ENCODE measurements at regions of chr11 and their contacts with region 1.

Region 1: GRCh38 chr11:45527898-45528297 is 137.5 kb downstream of the CHST1 start:
- DNase-seq: no peak
- H3K4me3 ChIP-seq: no peak overlapping the region
- H3K27ac ChIP-seq: no peak overlapping the region
- H3K4me1 ChIP-seq: no peaks in the 10 kb centered on the region
- H3K27me3 ChIP-seq: no peaks in the 10 kb centered on the region
- CTCF ChIP-seq: no peak
- EP300 ChIP-seq: no peak
- POLR2A ChIP-seq: no peak

Region 2: GRCh38 chr11:45339729-45340519 is 188.0 kb before region 1 on chr11:
- in situ Hi-C with region 1: no loop called
- intact Hi-C with region 1: no loop called
- DNase-seq: peak; percentile 96
- H3K4me3 ChIP-seq: peak overlapping the region in 1 of 4 donors; percentile 11
- H3K27ac ChIP-seq: no peak overlapping the region
- H3K4me1 ChIP-seq: peaks cover 0 to 8% (median 3%) of the 10 kb centered on the region in 4 donors
- H3K27me3 ChIP-seq: peaks cover 22% of the 10 kb centered on the region
- CTCF ChIP-seq: peak; percentile 89 to 95 (median 91)
- EP300 ChIP-seq: no peak
- POLR2A ChIP-seq: no peak

Region 3: GRCh38 chr11:45468262-45468856 is 59.5 kb before region 1 on chr11:
- in situ Hi-C with region 1: loop called in 1 of 4 experiments (anchors 10 kb)
- intact Hi-C with region 1: no loop called
- DNase-seq: no peak
- H3K4me3 ChIP-seq: no peak overlapping the region
- H3K27ac ChIP-seq: no peak overlapping the region
- H3K4me1 ChIP-seq: no peaks in the 10 kb centered on the region
- H3K27me3 ChIP-seq: no peaks in the 10 kb centered on the region
- CTCF ChIP-seq: no peak
- EP300 ChIP-seq: no peak
- POLR2A ChIP-seq: no peak

Region 4: DNA sequence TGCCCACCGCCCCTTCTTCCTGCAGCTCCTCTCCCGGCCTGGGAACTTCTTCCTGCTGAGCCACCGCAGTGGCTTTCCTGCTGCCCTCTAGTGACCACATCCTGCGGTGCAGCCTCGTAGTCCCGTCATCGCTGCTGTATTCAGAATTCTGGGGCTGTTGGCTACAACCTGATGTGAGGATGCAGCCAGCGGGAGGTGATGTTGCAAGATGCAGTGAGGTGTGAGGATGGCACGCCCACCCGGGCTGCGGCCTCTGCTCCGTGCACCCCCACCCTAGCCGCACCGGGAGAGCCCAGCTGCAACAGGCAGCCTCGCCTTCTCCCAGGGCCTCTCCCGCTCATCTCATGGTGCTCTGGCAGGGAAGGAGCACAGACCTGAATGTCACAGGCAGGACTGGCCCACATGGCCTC is 127.5 kb after region 1 on chr11:
- in situ Hi-C with region 1: no loop called
- intact Hi-C with region 1: no loop called
- DNase-seq: peak; percentile 65
- H3K4me3 ChIP-seq: no peak overlapping the region
- H3K27ac ChIP-seq: no peak overlapping the region
- H3K4me1 ChIP-seq: no peaks in the 10 kb centered on the region
- H3K27me3 ChIP-seq: peaks cover 36% of the 10 kb centered on the region
- CTCF ChIP-seq: peak; percentile 71 to 88 (median 85)
- EP300 ChIP-seq: no peak
- POLR2A ChIP-seq: no peak

Region 5: DNA sequence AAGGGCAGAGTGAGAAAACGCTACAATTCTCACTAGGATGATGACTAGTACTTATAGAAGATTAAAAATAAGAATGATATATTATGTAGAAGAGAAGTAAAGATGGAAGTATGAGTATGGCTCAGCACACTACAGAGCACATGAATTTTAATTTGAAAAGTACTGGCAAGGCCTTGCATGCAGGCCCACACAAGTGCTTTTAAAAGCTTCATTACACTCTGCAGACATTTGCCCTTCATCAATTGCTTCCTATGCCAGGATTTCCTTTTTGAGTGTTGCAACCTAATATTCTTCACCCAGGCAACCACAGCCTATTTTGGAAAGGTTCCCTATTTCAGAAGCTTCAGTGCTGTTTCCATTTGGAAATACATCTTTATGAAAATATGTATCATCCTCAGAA is 475.7 kb after region 1 on chr11:
- in situ Hi-C with region 1: no loop called
- intact Hi-C with region 1: no loop called
- DNase-seq: no peak
- H3K4me3 ChIP-seq: no peak overlapping the region
- H3K27ac ChIP-seq: no peak overlapping the region
- H3K4me1 ChIP-seq: peaks cover 0 to 12% (median 5%) of the 10 kb centered on the region in 4 donors
- H3K27me3 ChIP-seq: no peaks in the 10 kb centered on the region
- CTCF ChIP-seq: no peak
- EP300 ChIP-seq: no peak
- POLR2A ChIP-seq: no peak

Measured in transverse colon (tissue), 4 donors.